PC-9 (cell line): ENCODE measurements at regions of chr9 and their contacts with region 1.

Region 1: DNA sequence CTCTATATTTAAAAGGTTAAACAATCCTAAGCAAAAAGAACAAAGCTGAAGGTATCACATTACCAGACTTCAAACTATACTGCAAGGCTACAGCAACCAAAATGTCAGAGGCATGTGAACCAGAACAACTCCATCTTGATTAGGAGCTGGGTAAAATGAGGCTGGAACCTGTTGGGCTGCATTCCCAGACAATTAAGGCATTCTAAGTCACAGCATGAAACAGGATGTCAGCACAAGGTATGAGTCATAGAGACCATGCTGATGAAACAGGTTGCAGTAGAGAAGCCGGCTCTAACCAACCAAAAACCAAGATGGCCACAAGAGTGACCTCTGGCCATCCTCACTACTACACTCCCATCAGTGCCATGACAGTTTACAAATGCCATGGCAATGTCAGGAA is 252.0 kb downstream of the RASEF start:
- DNase-seq: peak; percentile 75 to 82
- H3K4me3 ChIP-seq: no peak overlapping the region
- H3K27ac ChIP-seq: peak overlapping the region; percentile 71
- H3K4me1 ChIP-seq: peaks cover 12% of the 10 kb centered on the region
- H3K27me3 ChIP-seq: no peaks in the 10 kb centered on the region
- CTCF ChIP-seq: no peak

Region 2: DNA sequence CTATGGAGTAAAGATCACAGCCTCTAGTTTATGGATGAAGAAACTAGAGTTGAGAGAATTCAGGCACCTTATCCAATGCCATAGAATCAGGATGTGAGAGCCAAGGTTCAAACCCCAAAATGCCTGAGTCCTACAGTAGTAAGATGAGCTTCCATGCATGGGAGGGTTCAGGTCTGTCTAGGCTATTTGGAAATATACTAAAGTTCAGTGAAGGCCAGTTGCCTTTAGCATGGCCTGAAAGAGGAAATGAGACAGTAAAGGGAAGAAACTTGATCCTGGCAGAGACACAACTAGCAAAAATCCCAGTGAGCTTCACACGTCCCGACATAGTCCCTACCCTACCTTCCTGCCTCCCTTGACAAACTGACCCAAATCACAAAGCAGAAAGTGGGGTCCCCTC is 65.0 kb before region 1 on chr9:
- CTCF ChIA-PET with region 1: no interaction called
- POLR2A ChIA-PET with region 1: interaction called, 18 read pairs
- intact Hi-C with region 1: no loop called
- DNase-seq: no peak
- H3K4me3 ChIP-seq: no peak overlapping the region
- H3K27ac ChIP-seq: no peak overlapping the region
- H3K4me1 ChIP-seq: no peaks in the 10 kb centered on the region
- H3K27me3 ChIP-seq: no peaks in the 10 kb centered on the region
- CTCF ChIP-seq: no peak

Region 3: DNA sequence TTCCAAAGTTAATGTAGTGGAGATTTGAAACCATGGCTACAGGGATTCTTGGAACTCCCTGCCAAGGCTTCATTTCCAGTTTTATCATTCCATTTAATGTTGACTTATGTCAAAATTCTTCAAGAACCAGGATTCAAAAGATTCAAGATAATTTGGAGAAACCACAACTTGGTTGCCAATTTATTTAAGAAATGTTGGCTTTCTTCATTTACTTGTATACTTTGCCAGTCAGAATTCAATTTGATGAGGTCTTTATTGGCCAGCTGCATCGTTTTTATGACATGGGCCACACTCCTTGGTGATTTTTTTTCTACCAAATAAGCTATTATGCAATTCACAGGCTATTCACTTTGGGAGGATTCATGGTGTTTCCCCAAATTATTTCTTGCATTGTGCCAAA is 305.1 kb after region 1 on chr9:
- CTCF ChIA-PET with region 1: no interaction called
- POLR2A ChIA-PET with region 1: no interaction called
- intact Hi-C with region 1: no loop called
- DNase-seq: no peak
- H3K4me3 ChIP-seq: no peak overlapping the region
- H3K27ac ChIP-seq: no peak overlapping the region
- H3K4me1 ChIP-seq: no peaks in the 10 kb centered on the region
- H3K27me3 ChIP-seq: no peaks in the 10 kb centered on the region
- CTCF ChIP-seq: no peak